ENCODE measurements at regions of chr9 and their contacts with region 1.

Region 1: DNA sequence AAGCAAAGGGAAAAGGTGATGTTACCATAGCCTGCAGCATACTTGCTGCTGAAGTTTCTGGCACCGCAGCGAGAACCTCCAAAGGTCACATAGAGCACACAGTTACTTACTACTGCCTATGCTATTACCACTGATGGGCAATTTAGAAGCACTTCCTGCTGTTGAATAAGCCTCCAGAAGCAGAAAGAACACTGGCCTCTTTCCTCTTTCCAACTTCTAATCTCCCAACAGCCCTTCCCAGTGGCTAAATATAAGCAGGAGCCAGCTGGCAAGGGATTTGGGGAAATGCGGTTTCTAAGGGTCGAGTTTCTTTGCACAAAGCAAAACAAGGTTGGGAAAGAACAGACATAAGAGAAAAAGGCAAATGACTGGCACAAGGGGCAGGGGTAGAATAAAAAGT is 669.2 kb upstream of the ACO1 start:
- DNase-seq: no peak
- ATAC-seq: no peak
- H3K4me3 ChIP-seq: no peak overlapping the region
- H3K27ac ChIP-seq: no peak overlapping the region
- H3K4me1 ChIP-seq: no peaks in the 10 kb centered on the region
- H3K27me3 ChIP-seq: no peaks in the 10 kb centered on the region
- CTCF ChIP-seq: no peak

Region 2: DNA sequence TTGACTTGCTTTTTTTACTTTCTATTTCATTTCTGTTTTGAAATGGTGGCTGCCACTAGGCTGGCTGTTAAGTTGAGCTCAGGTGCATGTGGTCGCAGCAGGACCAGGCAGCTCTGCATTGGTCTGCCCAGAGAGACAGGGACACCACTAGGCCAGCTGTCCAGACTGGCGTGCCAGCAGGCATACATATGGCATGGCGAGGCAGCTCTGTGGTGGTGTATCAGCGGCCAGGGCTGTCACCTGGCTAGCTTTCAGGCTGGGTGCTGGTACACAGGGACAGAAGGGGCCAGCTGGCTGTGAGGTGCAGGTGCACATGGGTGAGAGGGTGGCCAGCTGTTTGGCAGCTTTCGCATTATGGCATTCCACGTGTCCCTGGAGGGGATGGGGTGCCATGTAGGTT is 15.1 kb after region 1 on chr9:
- intact Hi-C with region 1: no loop called
- DNase-seq: no peak
- ATAC-seq: no peak
- H3K4me3 ChIP-seq: no peak overlapping the region
- H3K27ac ChIP-seq: no peak overlapping the region
- H3K4me1 ChIP-seq: no peaks in the 10 kb centered on the region
- H3K27me3 ChIP-seq: no peaks in the 10 kb centered on the region
- CTCF ChIP-seq: no peak

Region 3: DNA sequence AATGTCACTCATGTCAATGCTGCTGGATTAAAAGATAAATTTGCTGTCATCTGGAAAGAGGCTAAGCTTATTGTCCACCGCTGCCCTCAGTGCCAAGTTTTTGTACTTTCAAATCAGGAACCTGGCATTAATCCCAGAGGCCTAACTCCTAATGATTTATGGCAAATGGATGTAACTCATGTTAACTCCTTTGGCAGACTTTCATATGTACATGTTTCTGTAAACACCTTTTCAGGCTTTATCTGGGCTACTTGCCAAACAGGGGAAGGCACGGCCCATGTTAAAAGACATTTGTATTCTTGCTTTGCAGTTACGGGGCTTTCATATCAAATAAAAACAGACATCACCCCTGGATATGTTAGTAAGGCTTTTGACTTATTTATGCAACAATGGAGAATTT is 61.2 kb after region 1 on chr9:
- intact Hi-C with region 1: loop called in 1 of 10 experiments (anchors 10 kb)
- DNase-seq: no peak
- ATAC-seq: no peak
- H3K4me3 ChIP-seq: no peak overlapping the region
- H3K27ac ChIP-seq: no peak overlapping the region
- H3K4me1 ChIP-seq: no peaks in the 10 kb centered on the region
- H3K27me3 ChIP-seq: no peaks in the 10 kb centered on the region
- CTCF ChIP-seq: no peak

Measured in heart right ventricle (tissue), 16 donors.